ENCODE measurements at regions of chr4 and their contacts with region 1.

Region 1: DNA sequence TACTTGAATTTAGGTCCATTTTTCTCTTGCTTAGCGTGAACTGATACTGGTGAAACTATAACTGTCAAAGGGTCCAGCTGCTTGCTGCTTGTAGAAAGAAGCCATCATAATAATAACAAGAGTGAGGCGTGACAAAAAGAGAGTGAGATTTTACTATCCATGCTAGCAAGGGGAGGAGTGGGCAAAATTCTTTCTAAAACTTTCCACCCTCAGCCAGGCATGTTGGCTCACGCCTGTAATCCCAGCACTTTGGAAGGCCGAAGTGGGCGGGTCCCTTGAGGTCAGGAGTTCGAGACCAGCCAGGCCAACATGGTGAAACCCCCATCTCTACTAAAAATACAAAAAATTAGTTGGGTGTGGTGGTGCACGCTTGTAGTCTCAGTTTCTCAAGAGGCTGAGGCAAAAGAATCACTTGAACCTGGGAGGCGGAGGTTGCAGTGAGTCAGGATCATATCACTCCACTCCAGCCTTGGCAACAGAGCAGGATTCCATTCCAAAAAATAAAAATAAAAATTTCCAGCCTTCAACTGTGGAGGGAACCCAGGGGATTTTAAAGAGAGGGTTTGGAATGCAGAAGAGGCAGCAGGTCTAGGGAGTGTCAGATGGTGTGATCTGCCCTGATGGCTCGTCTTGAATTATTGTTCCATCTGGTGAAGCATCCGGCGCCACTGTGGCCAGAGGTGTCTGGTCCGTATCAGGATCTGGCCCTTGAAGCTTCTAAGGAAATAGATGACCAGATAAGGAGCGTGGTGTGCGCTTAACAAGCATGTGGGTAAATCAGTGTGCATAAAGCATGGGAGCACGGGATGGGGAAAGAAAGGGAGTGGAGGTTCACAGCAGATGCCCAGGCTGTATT is 51.8 kb downstream of the LRP2BP start:
- DNase-seq: peak in 2 of 5 donors; percentile 12 to 21
- ATAC-seq: peak in 3 of 4 donors; percentile 45 to 75 (median 62)
- H3K4me3 ChIP-seq: no peak overlapping the region
- H3K27ac ChIP-seq: peak overlapping the region in 6 of 12 donors; percentile 3 to 77 (median 29)
- H3K4me1 ChIP-seq: peaks cover 0 to 20% (median 16%) of the 10 kb centered on the region in 12 donors
- H3K27me3 ChIP-seq: no peaks in the 10 kb centered on the region
- CTCF ChIP-seq: no peak
- POLR2A ChIP-seq: no peak

Region 2: GRCh38 chr4:185369731-185370130 is 25.8 kb after region 1 on chr4:
- intact Hi-C with region 1: loop called in 1 of 10 experiments (anchors 5 kb)
- DNase-seq: no peak
- ATAC-seq: no peak
- H3K4me3 ChIP-seq: no peak overlapping the region
- H3K27ac ChIP-seq: no peak overlapping the region
- H3K4me1 ChIP-seq: peaks cover 0 to 7% (median 0%) of the 10 kb centered on the region in 12 donors
- H3K27me3 ChIP-seq: no peaks in the 10 kb centered on the region
- CTCF ChIP-seq: no peak
- POLR2A ChIP-seq: no peak

Region 3: DNA sequence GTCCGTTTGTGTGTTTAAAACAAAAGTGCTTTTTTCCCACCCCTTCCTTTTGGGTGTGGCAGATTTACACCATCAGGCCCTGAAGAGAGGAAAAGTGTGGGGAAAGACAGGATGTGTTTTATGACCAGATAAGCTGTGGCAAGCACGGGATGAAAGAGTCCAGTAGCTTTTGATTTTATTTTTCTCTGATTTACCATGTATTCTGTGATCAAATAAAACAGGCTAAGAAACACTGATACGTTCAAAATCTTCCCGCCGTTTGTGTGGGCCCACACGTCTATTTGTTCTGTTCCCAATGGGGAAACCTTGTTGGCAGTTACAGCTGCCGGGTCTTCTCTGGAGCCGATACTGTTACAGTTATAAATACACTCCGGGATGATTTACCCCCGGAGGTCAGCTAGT is 41.0 kb after region 1 on chr4:
- intact Hi-C with region 1: loop called in 2 of 10 experiments (anchors 5 kb)
- DNase-seq: peak in 2 of 5 donors; percentile 18 to 29
- ATAC-seq: peak; percentile 18 to 89 (median 58)
- H3K4me3 ChIP-seq: peak overlapping the region in 6 of 12 donors; percentile 7 to 32 (median 20)
- H3K27ac ChIP-seq: peak overlapping the region in 10 of 12 donors; percentile 2 to 75 (median 50)
- H3K4me1 ChIP-seq: peaks cover 0 to 14% (median 0%) of the 10 kb centered on the region in 12 donors
- H3K27me3 ChIP-seq: no peaks in the 10 kb centered on the region
- CTCF ChIP-seq: no peak
- POLR2A ChIP-seq: no peak

Region 4: GRCh38 chr4:185395956-185396723 is 52.2 kb after region 1 on chr4:
- intact Hi-C with region 1: loop called in 1 of 10 experiments (anchors 5 kb)
- DNase-seq: peak; percentile 96 to 99 (median 97)
- ATAC-seq: peak; percentile 92 to 98 (median 96)
- H3K4me3 ChIP-seq: peak overlapping the region; percentile 64 to 88 (median 77)
- H3K27ac ChIP-seq: peak overlapping the region; percentile 98 to 100 (median 100)
- H3K4me1 ChIP-seq: peaks cover 0 to 46% (median 26%) of the 10 kb centered on the region in 12 donors
- H3K27me3 ChIP-seq: no peaks in the 10 kb centered on the region
- CTCF ChIP-seq: peak in 2 of 12 donors; percentile 10 to 17
- POLR2A ChIP-seq: peak in 1 of 2 donors; percentile 67

Region 5: DNA sequence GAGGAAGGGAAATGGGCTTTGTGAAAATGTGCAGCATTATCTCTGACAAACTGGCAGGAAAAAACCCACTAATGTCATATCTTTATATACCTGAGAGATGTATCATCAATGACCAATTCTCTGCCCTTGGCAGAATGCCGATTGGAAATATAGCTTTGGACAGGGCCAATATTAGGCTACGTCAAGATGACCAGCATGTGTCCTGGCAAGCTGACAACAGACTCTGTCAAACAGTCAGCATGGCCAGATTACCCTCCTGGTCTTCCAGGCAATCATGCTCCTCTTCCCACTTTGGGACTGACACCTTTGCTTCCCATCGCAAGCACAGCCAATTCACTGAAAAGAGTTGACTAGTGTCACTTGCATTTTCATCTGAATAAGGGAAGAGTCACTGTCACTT is 411.0 kb after region 1 on chr4:
- intact Hi-C with region 1: no loop called
- DNase-seq: peak in 1 of 5 donors; percentile 41
- ATAC-seq: peak in 3 of 4 donors; percentile 20 to 51 (median 44)
- H3K4me3 ChIP-seq: no peak overlapping the region
- H3K27ac ChIP-seq: peak overlapping the region in 5 of 12 donors; percentile 9 to 58 (median 21)
- H3K4me1 ChIP-seq: peaks cover 0 to 83% (median 32%) of the 10 kb centered on the region in 12 donors
- H3K27me3 ChIP-seq: no peaks in the 10 kb centered on the region
- CTCF ChIP-seq: no peak
- POLR2A ChIP-seq: no peak